ENCODE measurements at regions of chr9 and their contacts with region 1.

Region 1: GRCh38 chr9:17531642-17532254 is 47.1 kb upstream of the SH3GL2 start:
- DNase-seq: peak; percentile 34 to 50
- H3K4me3 ChIP-seq: no peak overlapping the region
- H3K4me3 Mint-ChIP-seq: no peak overlapping the region
- H3K27ac Mint-ChIP-seq: no peak overlapping the region
- H3K4me1 ChIP-seq: no peaks in the 10 kb centered on the region
- H3K4me1 Mint-ChIP-seq: no peaks in the 10 kb centered on the region
- H3K27me3 ChIP-seq: no peaks in the 10 kb centered on the region
- H3K27me3 Mint-ChIP-seq: peaks cover 7% of the 10 kb centered on the region
- CTCF ChIP-seq: peak; percentile 61 to 63

Region 2: GRCh38 chr9:17436854-17437253 is 94.9 kb before region 1 on chr9:
- CTCF ChIA-PET with region 1: no interaction called
- POLR2A ChIA-PET with region 1: no interaction called
- intact Hi-C with region 1: no loop called
- DNase-seq: no peak
- H3K4me3 ChIP-seq: no peak overlapping the region
- H3K4me3 Mint-ChIP-seq: no peak overlapping the region
- H3K27ac Mint-ChIP-seq: no peak overlapping the region
- H3K4me1 ChIP-seq: no peaks in the 10 kb centered on the region
- H3K4me1 Mint-ChIP-seq: no peaks in the 10 kb centered on the region
- H3K27me3 ChIP-seq: no peaks in the 10 kb centered on the region
- H3K27me3 Mint-ChIP-seq: no peaks in the 10 kb centered on the region
- CTCF ChIP-seq: no peak

Region 3: GRCh38 chr9:17613763-17614162 is 82.0 kb after region 1 on chr9:
- CTCF ChIA-PET with region 1: no interaction called
- POLR2A ChIA-PET with region 1: no interaction called
- intact Hi-C with region 1: loop called (anchors 10 kb)
- DNase-seq: no peak
- H3K4me3 ChIP-seq: no peak overlapping the region
- H3K4me3 Mint-ChIP-seq: no peak overlapping the region
- H3K27ac Mint-ChIP-seq: no peak overlapping the region
- H3K4me1 ChIP-seq: no peaks in the 10 kb centered on the region
- H3K4me1 Mint-ChIP-seq: no peaks in the 10 kb centered on the region
- H3K27me3 ChIP-seq: no peaks in the 10 kb centered on the region
- H3K27me3 Mint-ChIP-seq: peaks cover 11% of the 10 kb centered on the region
- CTCF ChIP-seq: no peak

Region 4: DNA sequence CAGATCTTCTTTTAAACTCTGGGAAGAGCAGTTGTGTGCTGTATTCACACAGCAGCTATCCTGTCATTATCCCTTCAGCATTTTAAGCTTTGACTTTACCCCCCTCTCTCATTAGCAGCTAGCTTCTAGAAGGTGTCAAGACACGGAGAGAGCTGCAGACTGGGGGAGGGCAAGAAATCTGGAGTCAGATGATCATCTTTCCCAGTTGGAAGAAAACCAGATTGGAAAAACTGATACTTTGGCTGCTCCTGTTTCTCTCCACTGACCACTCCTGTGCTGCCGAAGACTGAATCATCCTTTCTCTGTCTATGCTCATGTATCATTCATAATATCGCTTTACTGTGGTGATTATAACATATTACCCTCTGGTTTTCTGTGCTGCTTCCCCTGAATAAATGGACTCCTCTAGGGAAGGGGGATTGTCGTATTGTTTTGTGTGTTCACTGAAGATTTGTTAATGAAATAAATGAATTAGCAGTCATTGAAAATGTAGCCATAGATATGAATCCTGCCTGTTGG is 122.3 kb after region 1 on chr9:
- CTCF ChIA-PET with region 1: no interaction called
- POLR2A ChIA-PET with region 1: no interaction called
- intact Hi-C with region 1: loop called (anchors 10 kb)
- DNase-seq: no peak
- H3K4me3 ChIP-seq: no peak overlapping the region
- H3K4me3 Mint-ChIP-seq: no peak overlapping the region
- H3K27ac Mint-ChIP-seq: no peak overlapping the region
- H3K4me1 ChIP-seq: no peaks in the 10 kb centered on the region
- H3K4me1 Mint-ChIP-seq: no peaks in the 10 kb centered on the region
- H3K27me3 ChIP-seq: no peaks in the 10 kb centered on the region
- H3K27me3 Mint-ChIP-seq: peaks cover 15% of the 10 kb centered on the region
- CTCF ChIP-seq: no peak

Region 5: GRCh38 chr9:17793713-17794622 is 262.2 kb after region 1 on chr9:
- CTCF ChIA-PET with region 1: interaction called, 3 read pairs
- POLR2A ChIA-PET with region 1: no interaction called
- intact Hi-C with region 1: loop called (anchors 2 kb)
- DNase-seq: peak; percentile 36 to 42
- H3K4me3 ChIP-seq: no peak overlapping the region
- H3K4me3 Mint-ChIP-seq: no peak overlapping the region
- H3K27ac Mint-ChIP-seq: no peak overlapping the region
- H3K4me1 ChIP-seq: no peaks in the 10 kb centered on the region
- H3K4me1 Mint-ChIP-seq: no peaks in the 10 kb centered on the region
- H3K27me3 ChIP-seq: no peaks in the 10 kb centered on the region
- H3K27me3 Mint-ChIP-seq: peaks cover 4% of the 10 kb centered on the region
- CTCF ChIP-seq: peak; percentile 28 to 67

Region 6: DNA sequence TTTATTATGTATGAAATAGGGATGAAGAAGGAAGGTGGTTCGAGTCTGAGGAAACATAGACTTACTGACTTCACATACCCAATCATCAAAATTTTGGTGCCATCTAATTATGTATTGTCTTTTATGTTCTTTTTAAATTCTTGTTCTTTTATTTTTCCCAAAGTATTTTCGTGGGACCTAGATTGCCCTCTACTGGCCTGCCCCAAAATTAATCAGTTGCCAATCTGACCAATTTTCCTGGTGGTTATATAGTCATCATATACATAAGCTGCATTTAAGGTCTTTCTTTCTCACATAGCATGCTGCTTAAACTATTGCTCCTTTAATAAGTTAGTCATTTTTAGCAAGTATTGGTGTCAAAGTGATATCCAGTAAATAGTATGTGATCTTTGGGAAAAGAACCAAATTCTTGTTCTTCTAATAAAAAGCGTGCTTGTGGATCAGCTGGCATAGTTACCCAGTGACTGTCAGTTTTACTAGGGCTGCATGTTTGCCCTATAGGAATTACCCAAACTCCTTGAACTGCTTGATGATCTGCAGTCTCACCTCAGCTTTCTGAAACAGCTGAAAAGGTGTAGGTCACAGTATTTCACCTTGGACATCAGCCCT is 270.6 kb after region 1 on chr9:
- CTCF ChIA-PET with region 1: no interaction called
- POLR2A ChIA-PET with region 1: no interaction called
- intact Hi-C with region 1: loop called (anchors 1 kb)
- DNase-seq: no peak
- H3K4me3 ChIP-seq: no peak overlapping the region
- H3K4me3 Mint-ChIP-seq: no peak overlapping the region
- H3K27ac Mint-ChIP-seq: no peak overlapping the region
- H3K4me1 ChIP-seq: no peaks in the 10 kb centered on the region
- H3K4me1 Mint-ChIP-seq: no peaks in the 10 kb centered on the region
- H3K27me3 ChIP-seq: no peaks in the 10 kb centered on the region
- H3K27me3 Mint-ChIP-seq: no peaks in the 10 kb centered on the region
- CTCF ChIP-seq: peak in 1 of 2 experiments; percentile 19

Region 7: GRCh38 chr9:17837965-17838364 is 306.2 kb after region 1 on chr9:
- CTCF ChIA-PET with region 1: interaction called, 4 read pairs
- POLR2A ChIA-PET with region 1: no interaction called
- intact Hi-C with region 1: loop called (anchors 1 kb)
- DNase-seq: no peak
- H3K4me3 ChIP-seq: no peak overlapping the region
- H3K4me3 Mint-ChIP-seq: no peak overlapping the region
- H3K27ac Mint-ChIP-seq: no peak overlapping the region
- H3K4me1 ChIP-seq: no peaks in the 10 kb centered on the region
- H3K4me1 Mint-ChIP-seq: no peaks in the 10 kb centered on the region
- H3K27me3 ChIP-seq: no peaks in the 10 kb centered on the region
- H3K27me3 Mint-ChIP-seq: peaks cover 2% of the 10 kb centered on the region
- CTCF ChIP-seq: peak in 1 of 2 experiments; percentile 28

Region 8: DNA sequence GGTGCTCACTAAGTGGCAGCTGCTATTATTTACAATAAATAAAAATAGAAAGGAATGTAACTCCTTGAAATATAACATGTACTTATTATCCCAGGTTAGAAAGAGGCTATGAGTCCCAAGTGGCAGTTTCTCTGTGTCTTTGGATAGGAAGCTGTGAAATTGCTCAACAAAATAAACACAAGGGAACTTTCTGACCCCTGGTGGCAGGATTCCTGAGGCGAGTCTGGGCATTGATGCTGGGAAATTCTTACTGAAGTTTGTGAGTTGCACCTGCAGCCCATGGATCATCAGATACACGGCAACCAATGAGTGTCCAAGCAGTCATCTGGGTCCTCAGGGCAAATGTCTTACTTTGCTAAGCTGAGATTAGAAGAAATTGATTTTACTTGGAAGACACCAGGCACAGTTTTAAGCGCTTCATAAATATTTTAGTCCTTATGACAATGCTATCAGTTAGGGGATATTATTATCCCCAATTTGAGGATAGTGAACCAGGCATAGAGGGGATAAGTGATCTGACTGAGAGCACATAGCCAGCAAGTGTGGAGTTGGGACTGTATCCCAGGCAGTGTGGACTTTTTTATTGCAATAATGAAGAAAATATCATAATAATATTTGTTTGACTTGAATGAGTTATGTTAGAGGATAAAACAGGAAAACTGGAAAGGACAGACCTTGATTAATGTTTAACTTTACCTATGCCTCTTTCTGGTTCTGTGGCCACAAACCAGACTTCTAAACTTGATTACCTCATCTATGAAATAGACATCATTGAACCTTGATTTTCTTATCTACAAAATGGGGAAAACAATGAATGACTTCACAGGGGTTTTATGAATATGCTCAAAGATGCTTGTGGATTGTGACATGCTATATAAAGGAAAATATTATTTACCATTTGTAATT is 676.7 kb after region 1 on chr9:
- CTCF ChIA-PET with region 1: no interaction called
- POLR2A ChIA-PET with region 1: no interaction called
- intact Hi-C with region 1: loop called (anchors 5 kb)
- DNase-seq: peak; percentile 62 to 70
- H3K4me3 ChIP-seq: no peak overlapping the region
- H3K4me3 Mint-ChIP-seq: no peak overlapping the region
- H3K27ac Mint-ChIP-seq: no peak overlapping the region
- H3K4me1 ChIP-seq: peaks cover 6% of the 10 kb centered on the region
- H3K4me1 Mint-ChIP-seq: no peaks in the 10 kb centered on the region
- H3K27me3 ChIP-seq: no peaks in the 10 kb centered on the region
- H3K27me3 Mint-ChIP-seq: no peaks in the 10 kb centered on the region
- CTCF ChIP-seq: peak; percentile 46 to 67